B cell (primary cell): ENCODE measurements at regions of chr16 and their contacts with region 1.

Region 1: GRCh38 chr16:11224096-11224893 is 31.7 kb downstream of the SOCS1 start:
- DNase-seq: peak; percentile 65
- ATAC-seq: peak; percentile 34
- H3K4me3 ChIP-seq: peak overlapping the region in 1 of 5 experiments; percentile 61
- H3K4me3 Mint-ChIP-seq: peak overlapping the region; percentile 83
- H3K27ac ChIP-seq: peak overlapping the region; percentile 72 to 85
- H3K27ac Mint-ChIP-seq: peak overlapping the region; percentile 93
- H3K4me1 ChIP-seq: peaks cover 28 to 31% of the 10 kb centered on the region in 2 donors
- H3K4me1 Mint-ChIP-seq: peaks cover 34% of the 10 kb centered on the region
- H3K27me3 ChIP-seq: no peaks in the 10 kb centered on the region
- H3K27me3 Mint-ChIP-seq: no peaks in the 10 kb centered on the region
- CTCF ChIP-seq: no peak

Region 2: GRCh38 chr16:10558746-10559641 is 665.3 kb before region 1 on chr16:
- CTCF ChIA-PET with region 1: no interaction called
- POLR2A ChIA-PET with region 1: no interaction called
- intact Hi-C with region 1: no loop called
- DNase-seq: no peak
- ATAC-seq: no peak
- H3K4me3 ChIP-seq: no peak overlapping the region
- H3K4me3 Mint-ChIP-seq: no peak overlapping the region
- H3K27ac ChIP-seq: no peak overlapping the region
- H3K27ac Mint-ChIP-seq: no peak overlapping the region
- H3K4me1 ChIP-seq: peaks cover 20 to 22% of the 10 kb centered on the region in 2 donors
- H3K4me1 Mint-ChIP-seq: peaks cover 25% of the 10 kb centered on the region
- H3K27me3 ChIP-seq: no peaks in the 10 kb centered on the region
- H3K27me3 Mint-ChIP-seq: no peaks in the 10 kb centered on the region
- CTCF ChIP-seq: no peak

Region 3: DNA sequence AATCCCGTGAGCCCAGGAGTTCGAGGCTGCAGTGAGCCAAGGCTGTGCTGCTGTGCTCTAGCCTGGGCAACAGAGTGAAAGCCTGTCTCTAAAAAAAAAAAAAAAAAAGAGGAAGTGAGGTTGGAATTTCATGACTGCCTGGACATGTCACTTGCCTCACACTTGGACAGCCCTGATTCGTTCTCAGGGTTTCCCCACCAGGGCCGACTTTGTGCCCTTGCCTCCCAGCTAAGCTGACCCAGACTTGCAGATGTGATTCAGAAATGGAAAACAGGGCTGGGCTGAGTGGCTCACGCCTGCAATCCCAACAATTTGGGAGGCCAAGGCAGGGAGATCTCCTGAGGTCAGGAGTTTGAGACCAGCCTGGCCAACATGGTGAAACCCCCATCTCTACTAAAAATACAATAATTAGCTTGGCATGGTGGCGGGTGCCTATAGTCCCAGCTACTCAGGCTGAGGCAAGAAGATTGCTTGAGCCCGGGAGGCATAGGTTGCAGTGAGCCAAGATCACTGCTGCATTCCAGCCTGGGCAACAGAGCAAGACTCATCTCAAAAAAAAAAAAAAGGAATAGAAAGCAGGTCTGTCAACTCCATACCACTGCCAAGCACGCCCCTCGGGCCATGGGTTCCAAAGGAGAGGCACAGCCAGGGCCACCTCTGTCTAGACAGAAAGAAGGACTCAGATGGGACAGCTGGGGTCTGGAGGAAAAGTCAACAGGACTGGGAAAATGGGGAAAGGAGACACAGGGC is 15.2 kb before region 1 on chr16:
- CTCF ChIA-PET with region 1: interaction called, 4 read pairs
- POLR2A ChIA-PET with region 1: interaction called, 9 read pairs
- intact Hi-C with region 1: loop called (anchors 2 kb)
- DNase-seq: peak; percentile 30
- ATAC-seq: peak; percentile 25
- H3K4me3 ChIP-seq: no peak overlapping the region
- H3K4me3 Mint-ChIP-seq: no peak overlapping the region
- H3K27ac ChIP-seq: no peak overlapping the region
- H3K27ac Mint-ChIP-seq: no peak overlapping the region
- H3K4me1 ChIP-seq: peaks cover 7 to 19% of the 10 kb centered on the region in 2 donors
- H3K4me1 Mint-ChIP-seq: peaks cover 25% of the 10 kb centered on the region
- H3K27me3 ChIP-seq: peaks cover 0 to 20% (median 4%) of the 10 kb centered on the region in 4 experiments
- H3K27me3 Mint-ChIP-seq: peaks cover 21% of the 10 kb centered on the region
- CTCF ChIP-seq: no peak

Region 4: DNA sequence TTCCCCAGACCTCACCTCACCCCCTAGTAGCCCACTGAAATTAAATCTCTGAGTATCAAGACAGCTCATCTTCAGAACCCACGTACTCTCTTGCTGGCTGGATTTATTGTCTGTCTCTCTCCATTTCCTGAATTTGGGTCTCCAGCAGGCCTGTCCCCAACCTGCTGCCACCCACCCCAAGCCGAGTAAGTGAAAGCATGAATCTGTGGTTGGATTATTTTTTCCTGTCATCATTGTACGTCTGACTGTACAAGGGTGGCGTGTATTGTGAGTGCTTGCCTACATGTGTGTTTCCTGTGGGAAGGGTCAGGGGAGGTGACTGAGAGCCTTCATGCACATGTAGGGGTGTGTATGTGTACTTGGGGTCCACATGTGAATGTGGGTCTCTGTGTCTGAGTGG is 39.4 kb after region 1 on chr16:
- CTCF ChIA-PET with region 1: no interaction called
- POLR2A ChIA-PET with region 1: no interaction called
- intact Hi-C with region 1: no loop called
- DNase-seq: no peak
- ATAC-seq: peak; percentile 31
- H3K4me3 ChIP-seq: no peak overlapping the region
- H3K4me3 Mint-ChIP-seq: peak overlapping the region; percentile 1
- H3K27ac ChIP-seq: no peak overlapping the region
- H3K27ac Mint-ChIP-seq: peak overlapping the region; percentile 27
- H3K4me1 ChIP-seq: peaks cover 18 to 22% of the 10 kb centered on the region in 2 donors
- H3K4me1 Mint-ChIP-seq: peaks cover 22% of the 10 kb centered on the region
- H3K27me3 ChIP-seq: no peaks in the 10 kb centered on the region
- H3K27me3 Mint-ChIP-seq: no peaks in the 10 kb centered on the region
- CTCF ChIP-seq: no peak